MCF 10A (cell line): ENCODE measurements at regions of chr11 and their contacts with region 1.

Region 1: GRCh38 chr11:2532704-2533586 is 88.1 kb downstream of the KCNQ1 start:
- DNase-seq: peak; percentile 89
- H3K4me3 Mint-ChIP-seq: peak overlapping the region; percentile 64
- H3K27ac Mint-ChIP-seq: peak overlapping the region; percentile 42
- H3K4me1 Mint-ChIP-seq: peaks cover 19% of the 10 kb centered on the region
- H3K27me3 Mint-ChIP-seq: no peaks in the 10 kb centered on the region
- CTCF ChIP-seq: peak; percentile 98

Region 2: DNA sequence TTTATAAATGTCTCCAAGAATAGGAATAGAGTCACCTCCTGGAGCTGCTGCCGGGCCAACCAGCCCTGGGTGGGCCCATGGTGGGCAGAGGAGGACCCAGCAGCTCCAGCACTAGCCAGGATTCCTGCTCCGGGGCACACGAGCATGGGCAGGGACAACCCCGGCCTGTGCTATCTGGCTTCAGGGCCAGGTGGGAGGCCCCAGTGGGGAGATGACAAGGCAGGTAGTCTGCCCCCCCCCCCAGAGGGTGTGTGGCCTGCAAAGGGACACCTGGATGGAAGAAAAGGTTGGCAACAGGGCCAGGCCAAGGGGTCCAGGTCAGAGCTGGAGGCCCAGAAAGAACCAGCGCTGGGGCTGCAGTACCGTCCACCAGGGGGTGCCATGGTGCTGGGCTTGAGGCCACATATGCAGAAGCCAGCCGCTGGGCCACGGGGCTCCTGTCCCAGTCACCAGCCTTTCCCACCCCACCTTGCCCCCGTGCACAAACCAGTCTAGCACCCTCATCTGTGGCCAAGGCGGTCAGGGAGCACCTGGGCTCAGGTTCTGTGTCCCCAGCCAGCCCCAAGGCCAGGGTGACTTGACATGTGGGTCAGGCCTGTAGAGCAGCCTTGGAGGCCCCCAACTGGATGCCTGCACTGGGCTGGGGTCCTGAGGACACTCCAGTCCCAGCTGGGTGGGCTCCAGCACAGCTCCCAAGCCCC is 227.7 kb before region 1 on chr11:
- CTCF ChIA-PET with region 1: interaction called, 29 read pairs
- POLR2A ChIA-PET with region 1: no interaction called
- intact Hi-C with region 1: no loop called
- DNase-seq: peak; percentile 67
- H3K4me3 Mint-ChIP-seq: no peak overlapping the region
- H3K27ac Mint-ChIP-seq: no peak overlapping the region
- H3K4me1 Mint-ChIP-seq: peaks cover 7% of the 10 kb centered on the region
- H3K27me3 Mint-ChIP-seq: no peaks in the 10 kb centered on the region
- CTCF ChIP-seq: peak; percentile 77

Region 3: GRCh38 chr11:2428322-2428795 is 104.6 kb before region 1 on chr11:
- CTCF ChIA-PET with region 1: interaction called, 76 read pairs
- POLR2A ChIA-PET with region 1: no interaction called
- intact Hi-C with region 1: no loop called
- DNase-seq: peak; percentile 68
- H3K4me3 Mint-ChIP-seq: no peak overlapping the region
- H3K27ac Mint-ChIP-seq: no peak overlapping the region
- H3K4me1 Mint-ChIP-seq: no peaks in the 10 kb centered on the region
- H3K27me3 Mint-ChIP-seq: no peaks in the 10 kb centered on the region
- CTCF ChIP-seq: peak; percentile 88

Region 4: DNA sequence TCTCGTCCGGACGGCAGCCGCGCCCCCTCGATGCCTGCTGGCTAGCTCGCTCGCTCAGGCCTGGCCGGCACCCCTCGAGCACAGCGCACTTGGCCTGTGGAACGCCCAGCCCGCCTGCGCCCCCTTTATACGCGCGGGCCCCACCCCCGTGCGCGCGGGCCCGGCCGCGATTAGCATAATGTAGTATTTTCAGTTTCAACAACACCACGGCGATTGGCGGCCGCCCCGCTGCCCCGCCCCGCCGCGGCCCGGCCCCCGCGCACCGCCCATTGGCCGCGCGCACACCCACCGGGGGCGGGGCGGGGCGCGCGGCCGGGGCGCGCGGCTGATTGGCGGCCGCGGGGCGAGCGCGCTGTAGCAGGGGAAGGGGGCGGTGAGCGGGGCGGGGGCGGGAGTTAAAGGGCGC is 352.7 kb after region 1 on chr11 and contains the start of gene CDKN1C:
- CTCF ChIA-PET with region 1: interaction called, 443 read pairs
- POLR2A ChIA-PET with region 1: interaction called, 68 read pairs
- intact Hi-C with region 1: loop called (anchors 1 kb)
- DNase-seq: peak; percentile 63
- H3K4me3 Mint-ChIP-seq: peak within 1 kb of the TSS; percentile 83
- H3K27ac Mint-ChIP-seq: peak within 1 kb of the TSS; percentile 31
- H3K4me1 Mint-ChIP-seq: no peaks in the 10 kb centered on the region
- H3K27me3 Mint-ChIP-seq: no peaks in the 10 kb centered on the region
- CTCF ChIP-seq: no peak
- total RNA-seq, gene CDKN1C: 5.7 and 6.9 TPM in 2 replicates

Region 5: GRCh38 chr11:2901854-2902783 is 369.2 kb after region 1 on chr11:
- CTCF ChIA-PET with region 1: interaction called, 11 read pairs
- POLR2A ChIA-PET with region 1: no interaction called
- intact Hi-C with region 1: no loop called
- DNase-seq: peak; percentile 91
- H3K4me3 Mint-ChIP-seq: peak overlapping the region; percentile 47
- H3K27ac Mint-ChIP-seq: no peak overlapping the region
- H3K4me1 Mint-ChIP-seq: peaks cover 48% of the 10 kb centered on the region
- H3K27me3 Mint-ChIP-seq: no peaks in the 10 kb centered on the region
- CTCF ChIP-seq: no peak